ENCODE measurements at regions of chr11 and their contacts with region 1.

Region 1: DNA sequence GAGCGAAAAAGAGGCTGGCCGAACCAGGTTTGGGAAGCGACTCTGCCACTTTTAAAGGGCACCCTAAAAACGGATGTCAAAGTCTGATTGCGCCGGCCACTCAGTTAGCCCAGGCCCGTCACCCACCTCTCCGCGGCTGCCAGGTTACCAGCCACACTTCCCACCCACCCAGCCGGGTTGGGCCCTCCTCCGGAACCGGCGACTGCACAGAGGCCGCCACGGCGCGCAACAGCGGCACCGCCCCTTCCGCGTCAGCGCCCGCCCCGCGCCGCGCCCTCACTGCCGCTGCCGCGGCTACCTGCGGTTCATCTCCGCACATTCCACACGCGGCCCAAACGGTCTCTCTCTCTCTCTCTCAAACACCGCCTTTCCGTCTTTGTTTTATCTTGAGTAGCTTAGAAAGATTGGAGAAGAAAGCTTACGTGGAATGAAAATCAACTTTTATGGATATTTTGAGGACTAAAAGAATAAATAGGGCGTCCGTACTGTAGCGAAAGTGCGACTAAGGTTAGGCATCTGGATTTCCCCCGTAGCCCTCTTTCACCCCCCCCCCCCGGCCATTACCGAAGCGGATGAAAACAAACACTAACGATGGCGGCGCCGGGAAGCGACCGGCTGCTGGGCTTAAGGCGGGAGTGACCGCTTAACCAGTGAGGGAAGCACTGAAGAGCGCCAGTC is at the starts of genes ATG13 and HARBI1:
- DNase-seq: peak; percentile 94
- H3K4me3 ChIP-seq: peak within 1 kb of the TSS; percentile 97
- H3K27ac ChIP-seq: peak within 1 kb of the TSS; percentile 82
- H3K4me1 ChIP-seq: peaks cover 28% of the 10 kb centered on the region
- CTCF ChIP-seq: no peak
- total RNA-seq, gene ATG13: 53.2 and 60.6 TPM in 2 replicates
- total RNA-seq, gene HARBI1: 4.8 and 5.2 TPM in 2 replicates

Region 2: GRCh38 chr11:46489661-46490560 is 127.2 kb before region 1 on chr11:
- CTCF ChIA-PET with region 1: interaction called, 3 read pairs
- POLR2A ChIA-PET with region 1: interaction called, 3 read pairs
- intact Hi-C with region 1: loop called (anchors 1 kb)
- DNase-seq: peak; percentile 68
- H3K4me3 ChIP-seq: no peak overlapping the region
- H3K27ac ChIP-seq: no peak overlapping the region
- H3K4me1 ChIP-seq: no peaks in the 10 kb centered on the region
- CTCF ChIP-seq: peak; percentile 89

Region 3: GRCh38 chr11:46547579-46547978 is 69.6 kb before region 1 on chr11:
- CTCF ChIA-PET with region 1: no interaction called
- POLR2A ChIA-PET with region 1: no interaction called
- intact Hi-C with region 1: no loop called
- DNase-seq: no peak
- H3K4me3 ChIP-seq: no peak overlapping the region
- H3K27ac ChIP-seq: no peak overlapping the region
- H3K4me1 ChIP-seq: no peaks in the 10 kb centered on the region
- CTCF ChIP-seq: no peak

Region 4: GRCh38 chr11:46593550-46594373 is 23.4 kb before region 1 on chr11 and contains the start of gene AMBRA1:
- CTCF ChIA-PET with region 1: interaction called, 3 read pairs
- POLR2A ChIA-PET with region 1: interaction called, 6 read pairs
- intact Hi-C with region 1: loop called (anchors 2 kb)
- DNase-seq: peak; percentile 94
- H3K4me3 ChIP-seq: peak within 1 kb of the TSS; percentile 85
- H3K27ac ChIP-seq: peak within 1 kb of the TSS; percentile 36
- H3K4me1 ChIP-seq: peaks cover 22% of the 10 kb centered on the region
- CTCF ChIP-seq: no peak
- total RNA-seq, gene AMBRA1: 21.8 and 24.6 TPM in 2 replicates

Region 5: DNA sequence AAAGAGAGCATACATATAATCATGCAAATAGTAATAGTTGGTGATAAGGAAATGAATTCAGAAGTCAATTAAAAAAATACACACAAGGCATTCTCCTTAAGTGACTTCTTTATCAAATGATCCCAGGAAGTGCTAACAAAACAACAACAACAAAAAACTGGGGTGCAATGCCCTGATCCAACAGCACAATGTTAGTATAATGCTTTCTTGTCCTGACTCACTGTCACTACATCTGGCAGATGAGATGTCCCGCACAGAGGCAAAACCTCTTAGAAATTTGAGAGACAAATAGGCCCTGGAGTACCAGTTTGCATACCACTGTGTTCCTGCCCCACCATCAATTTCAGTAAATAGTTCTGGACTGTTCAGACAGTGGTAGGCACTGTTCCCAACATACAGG is 12.3 kb before region 1 on chr11:
- CTCF ChIA-PET with region 1: no interaction called
- POLR2A ChIA-PET with region 1: interaction called, 13 read pairs
- intact Hi-C with region 1: no loop called
- DNase-seq: no peak
- H3K4me3 ChIP-seq: no peak overlapping the region
- H3K27ac ChIP-seq: no peak overlapping the region
- H3K4me1 ChIP-seq: peaks cover 24% of the 10 kb centered on the region
- CTCF ChIP-seq: no peak

Region 6: DNA sequence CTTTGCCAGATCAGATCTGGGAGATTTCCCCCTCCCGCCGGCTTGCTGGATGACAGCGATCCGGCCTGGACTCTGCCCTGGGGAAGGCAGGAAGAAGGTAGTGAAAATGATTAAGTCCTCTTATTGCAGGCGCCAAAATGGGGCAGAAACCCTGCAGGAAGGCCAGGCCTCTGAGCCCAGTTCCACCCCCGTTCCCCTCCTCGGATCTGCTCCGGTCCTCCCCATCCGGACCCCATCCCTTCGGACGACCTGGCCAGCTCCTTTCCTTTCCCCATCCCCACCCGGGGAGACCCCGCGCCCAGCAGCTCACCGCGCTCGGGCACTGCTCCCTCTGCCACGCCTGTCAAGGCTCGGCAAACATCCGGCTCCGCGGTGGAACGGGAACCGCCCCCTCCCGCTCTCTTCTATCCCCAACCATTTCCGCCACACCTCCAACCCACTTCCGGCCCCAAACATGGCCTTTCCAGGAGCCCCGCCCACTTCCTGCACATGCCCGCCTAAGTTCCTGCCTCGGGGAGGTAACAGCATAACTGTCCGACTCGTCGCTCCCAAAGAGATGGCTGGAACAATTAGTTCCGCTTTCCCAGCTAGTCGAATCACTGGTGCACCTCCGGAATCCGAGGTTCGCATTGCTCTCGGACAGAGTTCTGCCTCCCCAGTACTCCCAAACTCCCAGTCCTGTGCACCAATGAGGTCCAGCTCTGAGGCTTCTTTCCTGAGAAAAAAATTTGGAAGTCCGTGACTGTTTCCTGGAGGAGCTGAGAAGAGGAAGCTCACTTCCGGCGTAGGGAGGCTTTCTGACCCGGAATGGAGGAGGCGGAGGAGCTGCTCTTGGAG is 83.3 kb after region 1 on chr11 and contains the starts of genes ARHGAP1 and ZNF408:
- CTCF ChIA-PET with region 1: no interaction called
- POLR2A ChIA-PET with region 1: interaction called, 10 read pairs
- intact Hi-C with region 1: no loop called
- DNase-seq: peak; percentile 99
- H3K4me3 ChIP-seq: peak within 1 kb of the TSS; percentile 92
- H3K27ac ChIP-seq: peak within 1 kb of the TSS; percentile 59
- H3K4me1 ChIP-seq: peaks cover 19% of the 10 kb centered on the region
- CTCF ChIP-seq: no peak
- total RNA-seq, gene ARHGAP1: 14.1 and 16.3 TPM in 2 replicates
- total RNA-seq, gene ZNF408: 7.2 and 15.2 TPM in 2 replicates